Prostate gland (tissue), 2 donors: ENCODE measurements at regions of chr1 and their contacts with region 1.

Region 1: DNA sequence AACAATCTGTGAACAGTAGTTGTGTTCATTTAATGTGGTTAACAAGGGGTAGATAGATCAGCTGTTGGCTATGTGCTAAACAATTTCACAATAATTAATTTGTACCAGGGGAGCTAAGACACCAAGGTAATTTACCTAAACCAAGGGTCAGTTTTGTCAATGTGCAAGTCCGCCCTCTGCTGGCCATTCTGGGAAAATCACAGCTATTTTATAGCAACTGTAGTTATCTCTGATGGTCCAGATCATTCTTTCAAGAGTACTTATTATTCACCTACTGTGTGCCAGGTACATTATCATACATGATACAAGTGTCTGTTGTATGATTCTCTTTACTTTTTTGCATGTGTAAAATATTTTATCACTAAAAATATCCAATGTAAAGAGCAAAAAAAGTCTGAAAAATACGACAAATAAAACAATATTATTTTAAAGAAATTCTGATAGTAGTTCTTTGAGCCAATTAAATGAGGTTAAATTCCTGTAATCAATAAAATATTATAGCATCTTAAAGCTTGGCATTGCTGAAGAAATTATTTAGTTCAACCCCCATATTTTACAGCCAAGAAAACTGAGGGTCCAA is 312.3 kb upstream of the FAM78B start:
- DNase-seq: peak; percentile 19
- H3K4me3 ChIP-seq: no peak overlapping the region
- H3K27ac ChIP-seq: no peak overlapping the region
- H3K4me1 ChIP-seq: no peaks in the 10 kb centered on the region
- H3K27me3 ChIP-seq: no peaks in the 10 kb centered on the region
- CTCF ChIP-seq: peak; percentile 32 to 73 (median 64)
- POLR2A ChIP-seq: no peak

Region 2: GRCh38 chr1:165928075-165928731 is 550.9 kb before region 1 on chr1:
- intact Hi-C with region 1: loop called (anchors 5 kb)
- DNase-seq: no peak
- H3K4me3 ChIP-seq: no peak overlapping the region
- H3K27ac ChIP-seq: no peak overlapping the region
- H3K4me1 ChIP-seq: no peaks in the 10 kb centered on the region
- H3K27me3 ChIP-seq: no peaks in the 10 kb centered on the region
- CTCF ChIP-seq: peak; percentile 17 to 55 (median 44)
- POLR2A ChIP-seq: no peak

Region 3: DNA sequence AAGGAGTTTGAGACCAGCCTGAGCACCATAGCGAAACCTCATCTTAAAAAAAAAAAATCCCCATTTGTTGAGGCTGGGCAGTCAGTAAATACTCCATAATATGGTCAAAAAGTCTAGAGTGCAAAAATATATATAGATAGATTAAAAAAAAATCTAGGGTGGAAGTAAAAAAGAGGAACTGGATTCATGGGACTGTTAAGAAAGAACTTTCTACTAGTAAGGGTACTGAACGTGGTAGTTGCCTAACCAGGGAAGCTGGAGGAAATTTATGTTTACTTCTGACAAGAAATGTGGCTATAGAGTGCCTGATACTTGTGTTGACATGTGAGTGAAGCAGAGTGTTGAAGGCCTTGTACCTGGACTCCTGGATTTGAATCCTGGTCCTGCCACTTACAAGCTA is 46.5 kb before region 1 on chr1:
- intact Hi-C with region 1: no loop called
- DNase-seq: no peak
- H3K4me3 ChIP-seq: no peak overlapping the region
- H3K27ac ChIP-seq: no peak overlapping the region
- H3K4me1 ChIP-seq: no peaks in the 10 kb centered on the region
- H3K27me3 ChIP-seq: no peaks in the 10 kb centered on the region
- CTCF ChIP-seq: no peak
- POLR2A ChIP-seq: no peak